ENCODE measurements at regions of chr1 and their contacts with region 1.

Region 1: GRCh38 chr1:40438391-40439015 is 11.8 kb upstream of the ZFP69B start:
- DNase-seq: peak; percentile 28 to 46 (median 31)
- H3K4me3 ChIP-seq: no peak overlapping the region
- H3K27ac ChIP-seq: no peak overlapping the region
- H3K4me1 ChIP-seq: peaks cover 0 to 2% (median 0%) of the 10 kb centered on the region in 4 experiments
- H3K27me3 ChIP-seq: no peaks in the 10 kb centered on the region

Region 2: DNA sequence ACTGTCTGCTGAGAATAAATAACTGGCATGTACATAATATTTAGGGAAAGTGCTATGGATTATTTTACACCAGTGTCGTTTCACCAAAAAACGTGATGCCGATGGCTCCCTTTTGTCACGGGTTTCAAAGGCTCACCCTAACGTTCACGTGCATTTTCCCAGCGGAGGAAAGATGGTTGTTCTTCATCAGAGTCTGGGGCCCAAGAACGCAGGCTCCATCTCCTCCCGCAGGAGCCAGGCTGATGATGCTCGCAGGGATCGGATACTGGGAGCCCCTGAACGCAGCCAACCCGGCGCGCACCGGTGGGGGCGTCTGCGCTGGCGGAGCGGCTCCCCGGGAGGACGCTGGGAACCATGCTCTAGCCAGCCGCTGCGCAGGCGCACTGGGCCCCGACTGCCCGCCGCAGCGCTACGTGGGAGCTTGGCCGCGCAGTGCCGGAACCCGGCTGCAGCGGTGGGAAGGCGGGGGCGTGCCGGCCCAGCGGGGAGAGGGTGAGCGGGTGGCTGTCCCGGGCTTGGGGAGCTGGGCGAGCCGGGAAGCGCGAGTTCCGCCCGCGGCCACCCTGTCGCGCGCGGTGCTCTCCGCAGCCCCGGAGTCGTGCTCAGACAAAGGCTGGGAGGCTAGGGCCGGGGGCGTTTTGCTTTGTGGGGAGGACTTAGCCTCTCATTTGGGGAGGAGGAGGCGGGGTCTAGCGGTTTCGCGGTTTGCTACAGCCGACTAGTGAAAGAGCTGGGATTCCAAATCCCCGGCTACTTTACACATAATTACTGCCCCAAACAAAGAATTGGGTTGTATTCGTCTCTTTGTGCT is 11.4 kb after region 1 on chr1 and contains the start of gene ZFP69B:
- CTCF ChIA-PET with region 1: interaction called, 12 read pairs
- POLR2A ChIA-PET with region 1: no interaction called
- DNase-seq: peak; percentile 91 to 94 (median 94)
- H3K4me3 ChIP-seq: peak within 1 kb of the TSS; percentile 44 to 80 (median 77)
- H3K27ac ChIP-seq: peak within 1 kb of the TSS; percentile 41 to 71
- H3K4me1 ChIP-seq: peaks cover 3 to 17% (median 11%) of the 10 kb centered on the region in 4 experiments
- H3K27me3 ChIP-seq: no peaks in the 10 kb centered on the region

Region 3: DNA sequence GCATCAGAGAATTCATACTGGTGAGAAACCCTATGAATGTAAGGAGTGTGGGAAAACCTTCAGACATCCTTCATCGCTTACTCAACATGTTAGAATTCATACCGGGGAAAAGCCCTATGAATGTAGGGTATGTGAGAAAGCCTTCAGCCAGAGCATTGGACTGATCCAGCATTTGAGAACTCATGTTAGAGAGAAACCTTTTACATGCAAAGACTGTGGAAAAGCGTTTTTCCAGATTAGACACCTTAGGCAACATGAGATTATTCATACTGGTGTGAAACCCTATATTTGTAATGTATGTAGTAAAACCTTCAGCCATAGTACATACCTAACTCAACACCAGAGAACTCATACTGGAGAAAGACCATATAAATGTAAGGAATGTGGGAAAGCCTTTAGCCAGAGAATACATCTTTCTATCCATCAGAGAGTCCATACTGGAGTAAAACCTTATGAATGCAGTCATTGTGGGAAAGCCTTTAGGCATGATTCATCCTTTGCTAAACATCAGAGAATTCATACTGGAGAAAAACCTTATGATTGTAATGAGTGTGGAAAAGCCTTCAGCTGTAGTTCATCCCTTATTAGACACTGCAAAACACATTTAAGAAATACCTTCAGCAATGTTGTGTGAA is 24.6 kb after region 1 on chr1:
- CTCF ChIA-PET with region 1: no interaction called
- POLR2A ChIA-PET with region 1: no interaction called
- DNase-seq: peak in 2 of 3 donors; percentile 10 to 36
- H3K4me3 ChIP-seq: no peak overlapping the region
- H3K27ac ChIP-seq: no peak overlapping the region
- H3K4me1 ChIP-seq: no peaks in the 10 kb centered on the region
- H3K27me3 ChIP-seq: no peaks in the 10 kb centered on the region

Region 4: GRCh38 chr1:40531381-40532061 is 93.0 kb after region 1 on chr1 and contains the start of gene ZNF684:
- CTCF ChIA-PET with region 1: interaction called, 14 read pairs
- POLR2A ChIA-PET with region 1: no interaction called
- DNase-seq: peak; percentile 92 to 94 (median 94)
- H3K4me3 ChIP-seq: peak within 1 kb of the TSS; percentile 81 to 96 (median 88)
- H3K27ac ChIP-seq: peak within 1 kb of the TSS; percentile 77 to 88
- H3K4me1 ChIP-seq: peaks cover 4 to 21% (median 17%) of the 10 kb centered on the region in 4 experiments
- H3K27me3 ChIP-seq: no peaks in the 10 kb centered on the region